ENCODE measurements at regions of chr6 and their contacts with region 1.

Region 1: GRCh38 chr6:155327326-155328073 is 13.2 kb upstream of the TFB1M start:
- DNase-seq: no peak
- ATAC-seq: peak; percentile 62
- H3K4me3 Mint-ChIP-seq: no peak overlapping the region
- H3K27ac Mint-ChIP-seq: no peak overlapping the region
- H3K4me1 Mint-ChIP-seq: peaks cover 3% of the 10 kb centered on the region
- H3K27me3 Mint-ChIP-seq: no peaks in the 10 kb centered on the region
- CTCF ChIP-seq: peak; percentile 91

Region 2: DNA sequence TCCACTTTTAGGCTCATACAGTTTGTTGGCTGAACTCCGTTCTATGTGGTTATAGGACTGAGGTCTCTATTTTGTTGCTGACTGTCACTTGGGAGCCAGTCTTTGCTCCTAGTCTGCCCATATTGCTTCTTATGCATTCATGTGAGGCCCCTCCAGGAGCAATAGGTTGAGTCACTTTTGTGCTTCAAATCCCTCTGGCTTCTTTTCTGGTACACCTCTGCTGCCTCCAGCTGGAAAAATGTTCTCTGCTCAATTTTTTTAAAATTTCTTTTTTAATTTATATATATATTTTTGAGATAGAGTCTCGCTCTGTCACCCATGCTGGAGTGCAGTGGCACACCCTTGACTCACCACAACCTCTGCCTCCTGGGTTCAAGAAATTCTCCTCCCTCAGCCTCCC is 170.9 kb after region 1 on chr6:
- CTCF ChIA-PET with region 1: interaction called, 3 read pairs
- POLR2A ChIA-PET with region 1: no interaction called
- intact Hi-C with region 1: loop called (anchors 1 kb)
- DNase-seq: no peak
- ATAC-seq: no peak
- H3K4me3 Mint-ChIP-seq: no peak overlapping the region
- H3K27ac Mint-ChIP-seq: no peak overlapping the region
- H3K4me1 Mint-ChIP-seq: peaks cover 6% of the 10 kb centered on the region
- H3K27me3 Mint-ChIP-seq: peaks cover 5% of the 10 kb centered on the region
- CTCF ChIP-seq: no peak

Region 3: GRCh38 chr6:156396068-156396771 is 1068.7 kb after region 1 on chr6:
- CTCF ChIA-PET with region 1: no interaction called
- POLR2A ChIA-PET with region 1: no interaction called
- intact Hi-C with region 1: loop called (anchors 5 kb)
- DNase-seq: no peak
- ATAC-seq: peak; percentile 62
- H3K4me3 Mint-ChIP-seq: peak overlapping the region; percentile 68
- H3K27ac Mint-ChIP-seq: peak overlapping the region; percentile 84
- H3K4me1 Mint-ChIP-seq: peaks cover 76% of the 10 kb centered on the region
- H3K27me3 Mint-ChIP-seq: no peaks in the 10 kb centered on the region
- CTCF ChIP-seq: no peak

Region 4: DNA sequence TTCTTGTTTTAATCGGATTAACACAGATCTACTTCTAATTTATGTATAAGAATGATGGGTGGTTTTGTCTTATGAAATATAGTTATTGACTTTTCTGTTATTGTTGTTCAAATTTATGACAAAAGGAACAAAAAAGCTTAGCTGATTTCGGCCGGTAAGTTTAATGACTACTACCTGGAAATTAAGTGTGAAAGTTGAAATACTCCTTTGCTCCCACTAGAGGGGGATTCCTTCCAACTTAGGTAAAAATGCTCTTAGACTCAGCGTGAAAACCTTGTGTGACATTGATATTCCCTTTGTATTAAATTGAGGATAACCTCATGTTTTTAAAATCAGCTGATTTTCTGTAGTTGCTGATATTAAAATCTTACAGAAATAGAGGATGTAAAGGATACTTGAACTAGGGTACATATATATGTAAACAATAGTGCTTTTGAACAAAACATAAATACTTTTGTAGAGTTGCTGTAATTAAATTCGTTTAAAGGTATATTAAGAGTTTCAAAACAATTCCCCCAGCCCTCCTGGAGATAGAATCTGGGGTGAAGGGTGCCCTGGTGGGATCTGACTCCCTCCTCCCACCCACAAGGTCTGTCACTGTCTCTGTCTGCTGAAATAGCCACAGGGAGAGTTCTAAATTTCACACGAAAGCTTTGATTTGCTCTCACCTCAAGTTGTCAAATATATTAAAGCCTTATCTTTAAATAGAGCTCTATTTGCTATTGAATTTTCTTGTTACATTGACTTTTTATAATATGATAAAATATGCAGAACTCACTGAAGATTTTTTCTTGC is 1707.1 kb after region 1 on chr6:
- CTCF ChIA-PET with region 1: no interaction called
- POLR2A ChIA-PET with region 1: no interaction called
- intact Hi-C with region 1: loop called (anchors 5 kb)
- DNase-seq: no peak
- ATAC-seq: peak; percentile 64
- H3K4me3 Mint-ChIP-seq: peak overlapping the region; percentile 61
- H3K27ac Mint-ChIP-seq: peak overlapping the region; percentile 63
- H3K4me1 Mint-ChIP-seq: peaks cover 39% of the 10 kb centered on the region
- H3K27me3 Mint-ChIP-seq: no peaks in the 10 kb centered on the region
- CTCF ChIP-seq: no peak

Region 5: GRCh38 chr6:157274471-157275226 is 1947.1 kb after region 1 on chr6:
- CTCF ChIA-PET with region 1: no interaction called
- POLR2A ChIA-PET with region 1: no interaction called
- intact Hi-C with region 1: loop called (anchors 1 kb)
- DNase-seq: peak; percentile 93
- ATAC-seq: peak; percentile 79
- H3K4me3 Mint-ChIP-seq: peak overlapping the region; percentile 94
- H3K27ac Mint-ChIP-seq: peak overlapping the region; percentile 96
- H3K4me1 Mint-ChIP-seq: peaks cover 9% of the 10 kb centered on the region
- H3K27me3 Mint-ChIP-seq: no peaks in the 10 kb centered on the region
- CTCF ChIP-seq: no peak